ENCODE measurements at regions of chr14 and their contacts with region 1.

Region 1: DNA sequence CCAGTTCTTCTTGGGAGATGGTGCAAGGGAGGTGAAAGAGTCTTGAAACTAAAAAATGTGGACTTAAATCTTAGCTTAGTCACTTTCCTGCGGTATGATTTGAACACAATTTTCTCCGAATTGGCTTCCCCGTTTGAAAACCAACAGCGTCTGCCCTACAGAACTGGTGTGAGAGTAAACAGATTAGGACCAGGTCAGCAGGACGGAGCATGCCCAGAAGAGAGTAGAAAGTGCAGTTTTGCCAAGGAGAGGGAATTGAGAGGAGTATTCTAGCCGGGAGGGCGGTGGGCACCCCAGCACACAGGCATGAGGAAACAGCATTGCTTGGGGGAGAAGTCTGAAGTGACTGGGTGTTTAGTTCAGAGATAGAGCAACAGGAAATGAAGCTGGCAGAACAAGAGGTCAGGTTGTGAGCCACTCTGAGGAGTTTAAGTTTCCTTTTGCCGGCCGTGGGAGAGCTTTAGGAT is 927.1 kb downstream of the VRK1 start:
- DNase-seq: peak in 7 of 10 donors; percentile 29 to 65 (median 57)
- ATAC-seq: peak; percentile 82 to 86
- H3K4me3 Mint-ChIP-seq: peak overlapping the region; percentile 77 to 92 (median 85)
- H3K27ac Mint-ChIP-seq: peak overlapping the region; percentile 88 to 100 (median 96)
- H3K4me1 Mint-ChIP-seq: peaks cover 44 to 84% (median 77%) of the 10 kb centered on the region in 4 donors
- H3K27me3 Mint-ChIP-seq: no peaks in the 10 kb centered on the region

Region 2: GRCh38 chr14:97468220-97468619 is 256.1 kb before region 1 on chr14:
- POLR2A ChIA-PET with region 1: no interaction called
- DNase-seq: no peak
- ATAC-seq: no peak
- H3K4me3 Mint-ChIP-seq: no peak overlapping the region
- H3K27ac Mint-ChIP-seq: peak overlapping the region in 2 of 10 donors; percentile 18 to 23
- H3K4me1 Mint-ChIP-seq: peaks cover 7 to 28% (median 22%) of the 10 kb centered on the region in 4 donors
- H3K27me3 Mint-ChIP-seq: no peaks in the 10 kb centered on the region

Region 3: GRCh38 chr14:97620066-97620465 is 104.2 kb before region 1 on chr14:
- POLR2A ChIA-PET with region 1: interaction called, 11 read pairs
- DNase-seq: no peak
- ATAC-seq: peak in 1 of 2 donors; percentile 18
- H3K4me3 Mint-ChIP-seq: peak overlapping the region; percentile 69 to 93 (median 86)
- H3K27ac Mint-ChIP-seq: peak overlapping the region; percentile 85 to 99 (median 96)
- H3K4me1 Mint-ChIP-seq: peaks cover 34 to 51% (median 47%) of the 10 kb centered on the region in 4 donors
- H3K27me3 Mint-ChIP-seq: no peaks in the 10 kb centered on the region

Region 4: GRCh38 chr14:97707603-97708002 is 16.7 kb before region 1 on chr14:
- POLR2A ChIA-PET with region 1: interaction called, 26 read pairs
- DNase-seq: peak in 2 of 10 donors; percentile 26 to 31
- ATAC-seq: peak; percentile 24 to 36
- H3K4me3 Mint-ChIP-seq: peak overlapping the region in 8 of 10 donors; percentile 12 to 89 (median 74)
- H3K27ac Mint-ChIP-seq: peak overlapping the region in 9 of 10 donors; percentile 71 to 94 (median 88)
- H3K4me1 Mint-ChIP-seq: peaks cover 62 to 98% (median 96%) of the 10 kb centered on the region in 4 donors
- H3K27me3 Mint-ChIP-seq: no peaks in the 10 kb centered on the region

Region 5: DNA sequence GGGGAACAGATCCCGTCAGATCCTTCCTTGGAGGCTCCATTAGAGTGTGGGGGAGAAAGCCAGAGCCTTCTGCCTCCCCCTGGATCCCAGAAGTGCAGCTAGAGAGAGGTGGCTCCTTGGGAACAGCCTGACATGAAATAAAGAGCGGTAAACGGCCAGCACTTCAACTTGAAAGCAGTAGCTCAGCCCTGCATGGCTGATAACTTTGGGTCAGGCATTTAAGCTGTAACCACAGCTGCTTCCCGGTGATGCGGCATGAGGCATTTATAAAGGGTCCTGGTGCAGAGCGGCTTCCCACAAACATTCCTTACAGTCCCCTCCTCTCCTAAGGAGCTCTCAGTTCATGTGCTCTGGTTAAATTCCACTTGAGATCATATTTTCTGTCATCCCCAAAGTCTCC is 33.2 kb after region 1 on chr14:
- POLR2A ChIA-PET with region 1: no interaction called
- DNase-seq: no peak
- ATAC-seq: no peak
- H3K4me3 Mint-ChIP-seq: no peak overlapping the region
- H3K27ac Mint-ChIP-seq: no peak overlapping the region
- H3K4me1 Mint-ChIP-seq: peaks cover 4 to 10% (median 8%) of the 10 kb centered on the region in 4 donors
- H3K27me3 Mint-ChIP-seq: no peaks in the 10 kb centered on the region

Region 6: GRCh38 chr14:97956581-97957479 is 232.5 kb after region 1 on chr14:
- POLR2A ChIA-PET with region 1: no interaction called
- DNase-seq: no peak
- ATAC-seq: no peak
- H3K4me3 Mint-ChIP-seq: no peak overlapping the region
- H3K27ac Mint-ChIP-seq: peak overlapping the region in 3 of 10 donors; percentile 2 to 42 (median 5)
- H3K4me1 Mint-ChIP-seq: peaks cover 16 to 64% (median 50%) of the 10 kb centered on the region in 4 donors
- H3K27me3 Mint-ChIP-seq: no peaks in the 10 kb centered on the region

Measured in naive thymus-derived CD8-positive, alpha-beta T cell (primary cell).